ENCODE measurements at regions of chr6 and their contacts with region 1.

Region 1: DNA sequence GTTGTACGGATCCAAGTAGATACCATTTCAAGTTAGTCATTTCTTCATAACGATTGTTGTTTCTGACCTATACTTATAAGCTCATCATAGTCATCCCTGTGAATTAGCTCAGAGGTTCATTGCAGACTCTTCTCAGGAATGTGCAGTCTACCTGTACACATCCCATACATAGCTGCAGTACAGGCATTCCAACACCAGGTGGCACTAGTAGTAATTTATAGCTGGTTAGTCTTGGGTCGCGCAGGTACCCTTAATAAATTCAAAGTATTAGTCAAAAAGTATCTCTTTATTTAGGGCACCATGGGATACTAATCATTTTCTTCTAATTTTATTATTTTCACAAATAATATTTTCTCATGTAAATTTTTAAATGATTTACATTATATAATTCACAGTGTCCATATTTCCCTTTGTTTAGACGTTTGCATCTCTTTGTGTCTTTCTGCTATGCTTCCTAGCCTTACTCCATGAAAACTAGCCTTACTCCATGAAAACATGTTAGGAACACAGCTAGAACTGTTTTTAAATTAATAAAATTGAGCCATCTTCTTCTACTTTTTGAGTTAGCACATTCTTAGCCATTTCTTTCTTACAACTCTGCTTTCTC is 128.6 kb upstream of the FAM83B start:
- DNase-seq: peak; percentile 73
- ATAC-seq: peak; percentile 51
- H3K4me3 Mint-ChIP-seq: no peak overlapping the region
- H3K27ac Mint-ChIP-seq: no peak overlapping the region
- H3K4me1 Mint-ChIP-seq: no peaks in the 10 kb centered on the region
- H3K27me3 Mint-ChIP-seq: no peaks in the 10 kb centered on the region

Region 2: DNA sequence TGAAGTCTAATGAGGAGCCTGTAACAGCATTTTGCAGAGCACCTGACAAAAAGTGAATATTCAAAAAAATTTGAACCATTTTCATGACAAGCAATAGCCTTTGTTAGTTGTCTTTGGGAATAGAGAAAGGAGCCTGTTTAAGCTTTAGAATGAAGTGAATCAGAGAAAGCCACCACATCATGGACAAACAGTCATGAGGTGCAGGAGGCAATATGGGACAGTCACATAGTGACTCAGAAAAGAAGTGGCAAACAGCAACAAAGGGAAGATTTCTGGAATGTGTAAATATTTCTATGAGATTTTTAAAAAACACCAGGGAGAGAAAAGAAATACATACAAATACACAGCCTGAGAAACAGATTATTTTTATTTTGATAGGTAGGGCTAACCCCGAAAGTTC is 1059.0 kb before region 1 on chr6:
- CTCF ChIA-PET with region 1: no interaction called
- POLR2A ChIA-PET with region 1: no interaction called
- intact Hi-C with region 1: no loop called
- DNase-seq: no peak
- ATAC-seq: no peak
- H3K4me3 Mint-ChIP-seq: no peak overlapping the region
- H3K27ac Mint-ChIP-seq: no peak overlapping the region
- H3K4me1 Mint-ChIP-seq: no peaks in the 10 kb centered on the region
- H3K27me3 Mint-ChIP-seq: peaks cover 3% of the 10 kb centered on the region

Region 3: DNA sequence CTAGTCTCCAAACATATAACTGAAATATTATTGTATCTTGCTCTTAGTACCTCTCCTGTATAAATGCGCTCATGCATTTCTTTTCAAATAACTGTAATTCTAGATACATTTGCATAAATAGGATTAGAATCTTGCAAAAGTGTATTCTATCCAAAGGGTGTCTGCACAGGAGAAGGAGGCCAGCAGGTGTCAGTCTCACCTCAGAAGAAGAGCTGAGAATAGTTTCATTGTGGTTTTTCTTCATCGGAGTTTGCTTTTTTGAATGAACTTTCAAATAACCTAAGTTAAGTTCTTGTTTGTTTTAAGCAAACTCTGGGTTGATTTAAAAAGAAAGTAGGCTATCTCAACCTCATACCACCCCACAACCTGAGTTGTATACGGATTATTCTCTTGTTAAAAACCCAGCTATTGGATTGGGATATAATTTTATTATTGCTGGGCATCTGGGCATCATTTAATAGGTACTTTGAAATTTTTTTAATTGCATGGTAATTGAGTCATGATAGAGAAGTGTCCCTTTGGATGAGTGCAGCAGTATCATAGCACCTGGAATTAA is 731.7 kb before region 1 on chr6:
- CTCF ChIA-PET with region 1: no interaction called
- POLR2A ChIA-PET with region 1: no interaction called
- intact Hi-C with region 1: loop called in 1 of 2 experiments (anchors 10 kb)
- DNase-seq: peak; percentile 48
- ATAC-seq: no peak
- H3K4me3 Mint-ChIP-seq: no peak overlapping the region
- H3K27ac Mint-ChIP-seq: no peak overlapping the region
- H3K4me1 Mint-ChIP-seq: no peaks in the 10 kb centered on the region
- H3K27me3 Mint-ChIP-seq: peaks cover 6% of the 10 kb centered on the region

Region 4: GRCh38 chr6:54992789-54993188 is 274.8 kb after region 1 on chr6:
- CTCF ChIA-PET with region 1: no interaction called
- POLR2A ChIA-PET with region 1: no interaction called
- intact Hi-C with region 1: loop called in 1 of 2 experiments (anchors 2 kb)
- DNase-seq: no peak
- ATAC-seq: no peak
- H3K4me3 Mint-ChIP-seq: no peak overlapping the region
- H3K27ac Mint-ChIP-seq: no peak overlapping the region
- H3K4me1 Mint-ChIP-seq: no peaks in the 10 kb centered on the region
- H3K27me3 Mint-ChIP-seq: no peaks in the 10 kb centered on the region

Region 5: GRCh38 chr6:55069132-55069781 is 351.3 kb after region 1 on chr6:
- CTCF ChIA-PET with region 1: interaction called, 6 read pairs
- POLR2A ChIA-PET with region 1: no interaction called
- intact Hi-C with region 1: loop called (anchors 1 to 2 kb)
- DNase-seq: peak; percentile 15
- ATAC-seq: no peak
- H3K4me3 Mint-ChIP-seq: no peak overlapping the region
- H3K27ac Mint-ChIP-seq: no peak overlapping the region
- H3K4me1 Mint-ChIP-seq: no peaks in the 10 kb centered on the region
- H3K27me3 Mint-ChIP-seq: no peaks in the 10 kb centered on the region

Region 6: GRCh38 chr6:55239099-55239498 is 521.1 kb after region 1 on chr6:
- CTCF ChIA-PET with region 1: no interaction called
- POLR2A ChIA-PET with region 1: no interaction called
- intact Hi-C with region 1: loop called (anchors 5 to 10 kb)
- DNase-seq: no peak
- ATAC-seq: no peak
- H3K4me3 Mint-ChIP-seq: no peak overlapping the region
- H3K27ac Mint-ChIP-seq: no peak overlapping the region
- H3K4me1 Mint-ChIP-seq: no peaks in the 10 kb centered on the region
- H3K27me3 Mint-ChIP-seq: no peaks in the 10 kb centered on the region

Measured in activated CD4-positive, alpha-beta T cell treated with anti-CD3 and anti-CD28 coated beads for 36 hours (primary cell).